Calu3 (cell line): ENCODE measurements at regions of chr6 and their contacts with region 1.

Region 1: DNA sequence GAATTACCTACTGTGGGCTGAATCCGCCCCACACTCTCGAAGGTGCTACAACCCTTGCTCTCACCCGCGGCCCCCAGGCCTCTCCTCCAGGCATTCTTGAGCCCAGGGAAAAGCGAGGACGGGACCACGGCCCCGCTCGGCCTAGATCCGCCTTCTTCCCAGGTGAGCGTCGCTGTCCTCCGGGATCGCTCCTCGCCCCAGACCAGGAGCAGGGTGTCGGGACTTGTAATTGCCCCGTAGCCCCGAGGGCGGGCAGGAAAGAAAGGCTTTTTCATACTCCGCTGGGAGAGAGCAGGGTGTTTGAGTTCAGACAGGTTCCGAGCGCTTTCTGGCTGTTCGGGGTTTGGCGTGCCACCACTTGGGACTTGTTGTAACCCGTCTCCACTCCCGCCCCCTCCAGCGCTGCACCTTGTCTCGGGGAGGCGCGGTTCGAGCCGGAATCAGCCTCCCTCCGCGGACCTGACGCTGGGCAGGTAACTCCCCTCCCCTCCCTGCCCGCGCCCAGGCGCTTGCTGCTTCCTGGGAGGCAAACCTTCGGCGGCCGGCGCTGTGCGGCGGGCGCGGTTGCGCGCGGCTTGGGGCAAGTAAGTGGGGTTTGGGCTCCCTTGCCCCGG is at the start of gene FAM83B:
- DNase-seq: peak; percentile 82
- H3K4me3 Mint-ChIP-seq: peak within 1 kb of the TSS; percentile 95
- H3K27ac Mint-ChIP-seq: peak within 1 kb of the TSS; percentile 78
- H3K4me1 Mint-ChIP-seq: peaks cover 44% of the 10 kb centered on the region
- H3K27me3 Mint-ChIP-seq: no peaks in the 10 kb centered on the region
- CTCF ChIP-seq: no peak
- total RNA-seq, gene FAM83B: 22.2 and 24.2 TPM in 2 replicates

Region 2: GRCh38 chr6:54801669-54802068 is 44.7 kb before region 1 on chr6:
- CTCF ChIA-PET with region 1: interaction called, 3 read pairs
- intact Hi-C with region 1: loop called (anchors 5 kb)
- DNase-seq: peak; percentile 30
- H3K4me3 Mint-ChIP-seq: peak overlapping the region; percentile 55
- H3K27ac Mint-ChIP-seq: peak overlapping the region; percentile 92
- H3K4me1 Mint-ChIP-seq: peaks cover 28% of the 10 kb centered on the region
- H3K27me3 Mint-ChIP-seq: no peaks in the 10 kb centered on the region
- CTCF ChIP-seq: no peak

Region 3: GRCh38 chr6:54860739-54861138 is 14.4 kb after region 1 on chr6:
- CTCF ChIA-PET with region 1: no interaction called
- intact Hi-C with region 1: loop called (anchors 2 kb)
- DNase-seq: peak; percentile 69
- H3K4me3 Mint-ChIP-seq: peak overlapping the region; percentile 64
- H3K27ac Mint-ChIP-seq: peak overlapping the region; percentile 98
- H3K4me1 Mint-ChIP-seq: peaks cover 74% of the 10 kb centered on the region
- H3K27me3 Mint-ChIP-seq: no peaks in the 10 kb centered on the region
- CTCF ChIP-seq: no peak